OCI-LY7 (cell line): ENCODE measurements at regions of chr22 and their contacts with region 1.

Region 1: GRCh38 chr22:42780070-42780540 is 59.4 kb upstream of the A4GALT start:
- DNase-seq: peak; percentile 90
- H3K4me3 ChIP-seq: no peak overlapping the region
- H3K27ac ChIP-seq: no peak overlapping the region
- H3K4me1 ChIP-seq: peaks cover 4% of the 10 kb centered on the region
- CTCF ChIP-seq: peak; percentile 89

Region 2: DNA sequence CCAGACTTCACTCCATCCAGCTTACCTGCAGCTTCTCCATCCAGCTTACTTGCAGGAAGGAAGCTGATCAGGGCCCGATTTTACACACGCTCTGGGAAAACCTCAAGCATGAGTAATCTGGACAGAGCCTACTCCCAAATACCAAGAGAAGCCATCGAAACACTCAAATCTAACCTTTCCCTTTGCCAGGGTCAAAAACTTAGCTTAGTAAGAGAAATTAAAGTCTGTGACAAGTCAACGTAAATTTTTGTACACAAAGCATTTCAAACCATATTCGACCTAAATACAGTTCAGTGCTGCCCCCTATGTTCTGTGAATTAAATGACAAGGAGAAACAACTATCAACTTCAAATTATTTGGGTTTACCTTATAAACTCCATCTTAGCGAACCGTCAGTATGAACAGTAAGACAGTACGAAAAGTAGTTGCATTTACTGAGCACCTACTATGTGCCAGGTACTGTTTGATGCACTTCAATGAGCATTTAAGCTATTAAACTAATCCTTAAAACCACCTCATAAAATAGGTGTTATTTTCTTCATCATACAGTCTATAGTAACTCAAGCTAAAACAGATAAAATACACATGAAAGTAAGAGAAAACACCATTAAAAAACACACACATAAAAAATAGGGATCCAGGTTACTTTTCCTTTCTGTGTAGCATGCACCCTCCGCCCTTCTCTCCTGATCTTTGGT is 40.1 kb after region 1 on chr22:
- CTCF ChIA-PET with region 1: no interaction called
- POLR2A ChIA-PET with region 1: interaction called, 4 read pairs
- intact Hi-C with region 1: loop called (anchors 5 kb)
- DNase-seq: peak; percentile 80
- H3K4me3 ChIP-seq: peak overlapping the region; percentile 24
- H3K27ac ChIP-seq: no peak overlapping the region
- H3K4me1 ChIP-seq: peaks cover 18% of the 10 kb centered on the region
- CTCF ChIP-seq: peak; percentile 98

Region 3: GRCh38 chr22:42863349-42863961 is 83.3 kb after region 1 on chr22:
- CTCF ChIA-PET with region 1: no interaction called
- POLR2A ChIA-PET with region 1: no interaction called
- intact Hi-C with region 1: loop called (anchors 1 kb)
- DNase-seq: no peak
- H3K4me3 ChIP-seq: no peak overlapping the region
- H3K27ac ChIP-seq: no peak overlapping the region
- H3K4me1 ChIP-seq: peaks cover 12% of the 10 kb centered on the region
- CTCF ChIP-seq: no peak

Region 4: DNA sequence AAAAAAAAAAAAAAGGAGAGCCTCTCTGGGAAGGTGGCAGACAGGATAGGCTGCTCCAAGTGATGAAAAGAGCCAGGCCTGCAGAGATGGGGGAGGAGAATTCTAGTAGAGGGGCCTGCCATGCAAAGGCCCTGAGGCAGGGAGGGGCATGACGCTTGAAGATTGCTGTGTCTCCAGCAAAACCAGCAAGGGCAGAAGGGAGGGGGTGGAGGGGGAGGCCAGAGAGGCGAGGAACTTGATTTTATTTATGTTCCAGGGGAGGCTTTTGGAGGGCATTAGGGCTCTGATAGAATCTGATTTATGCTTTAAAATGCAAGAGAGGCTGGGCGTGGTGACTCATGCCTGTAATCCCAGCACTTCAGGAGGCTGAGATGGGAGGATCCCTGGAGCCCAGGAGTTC is 251.5 kb after region 1 on chr22:
- CTCF ChIA-PET with region 1: no interaction called
- POLR2A ChIA-PET with region 1: no interaction called
- intact Hi-C with region 1: loop called (anchors 5 kb)
- DNase-seq: no peak
- H3K4me3 ChIP-seq: no peak overlapping the region
- H3K27ac ChIP-seq: no peak overlapping the region
- H3K4me1 ChIP-seq: no peaks in the 10 kb centered on the region
- CTCF ChIP-seq: no peak

Region 5: GRCh38 chr22:43088979-43089717 is 309.0 kb after region 1 on chr22 and contains the start of gene TTLL1:
- CTCF ChIA-PET with region 1: no interaction called
- POLR2A ChIA-PET with region 1: no interaction called
- intact Hi-C with region 1: loop called (anchors 1 kb)
- DNase-seq: peak; percentile 91
- H3K4me3 ChIP-seq: peak within 1 kb of the TSS; percentile 75
- H3K27ac ChIP-seq: peak within 1 kb of the TSS; percentile 48
- H3K4me1 ChIP-seq: peaks cover 21% of the 10 kb centered on the region
- CTCF ChIP-seq: no peak
- total RNA-seq, gene TTLL1: 5.5 and 5.8 TPM in 2 replicates